ENCODE measurements at regions of chr4 and their contacts with region 1.

Region 1: GRCh38 chr4:10743357-10743756 is 58.8 kb upstream of the CLNK start:
- DNase-seq: no peak
- H3K4me3 ChIP-seq: no peak overlapping the region
- H3K27ac ChIP-seq: no peak overlapping the region
- H3K4me1 ChIP-seq: no peaks in the 10 kb centered on the region
- H3K27me3 ChIP-seq: peaks cover 2% of the 10 kb centered on the region
- CTCF ChIP-seq: no peak

Region 2: GRCh38 chr4:10571909-10572308 is 171.4 kb before region 1 on chr4:
- CTCF ChIA-PET with region 1: no interaction called
- dilution Hi-C with region 1: no loop called
- in situ Hi-C with region 1: no loop called
- intact Hi-C with region 1: no loop called
- DNase-seq: peak; percentile 20
- H3K4me3 ChIP-seq: no peak overlapping the region
- H3K27ac ChIP-seq: no peak overlapping the region
- H3K4me1 ChIP-seq: no peaks in the 10 kb centered on the region
- H3K27me3 ChIP-seq: peaks cover 5% of the 10 kb centered on the region
- CTCF ChIP-seq: no peak

Region 3: GRCh38 chr4:10732914-10733415 is 10.4 kb before region 1 on chr4:
- CTCF ChIA-PET with region 1: no interaction called
- dilution Hi-C with region 1: no loop called
- in situ Hi-C with region 1: no loop called
- intact Hi-C with region 1: loop called (anchors 1 kb)
- DNase-seq: no peak
- H3K4me3 ChIP-seq: no peak overlapping the region
- H3K27ac ChIP-seq: no peak overlapping the region
- H3K4me1 ChIP-seq: no peaks in the 10 kb centered on the region
- H3K27me3 ChIP-seq: no peaks in the 10 kb centered on the region
- CTCF ChIP-seq: no peak

Region 4: DNA sequence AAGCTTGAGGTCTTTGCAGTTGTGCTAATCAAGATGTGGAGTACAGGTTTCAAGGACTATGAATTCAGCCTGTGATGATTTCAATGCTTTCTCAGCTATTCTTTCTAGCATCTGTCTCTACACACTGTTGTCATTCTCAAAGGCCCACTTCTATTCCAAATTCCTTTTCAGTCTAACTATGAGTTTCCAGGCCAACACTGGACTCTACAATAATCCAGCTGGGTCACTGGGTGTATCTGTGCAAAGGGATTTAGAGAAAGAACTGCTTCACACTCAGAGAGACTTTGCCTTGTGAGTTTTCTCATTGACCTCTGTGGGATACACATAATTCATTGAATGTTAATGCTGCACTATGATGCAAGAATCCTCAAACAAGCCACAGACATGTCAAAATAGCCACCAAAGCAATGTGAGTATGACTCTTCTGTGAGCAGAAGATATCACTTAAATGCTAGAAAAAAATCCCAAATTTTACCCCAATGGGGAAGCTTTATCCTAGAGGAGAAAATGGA is 113.0 kb after region 1 on chr4:
- CTCF ChIA-PET with region 1: no interaction called
- dilution Hi-C with region 1: no loop called
- in situ Hi-C with region 1: no loop called
- intact Hi-C with region 1: no loop called
- DNase-seq: no peak
- H3K4me3 ChIP-seq: no peak overlapping the region
- H3K27ac ChIP-seq: no peak overlapping the region
- H3K4me1 ChIP-seq: no peaks in the 10 kb centered on the region
- H3K27me3 ChIP-seq: no peaks in the 10 kb centered on the region
- CTCF ChIP-seq: no peak